ENCODE measurements at regions of chr2 and their contacts with region 1.

Region 1: DNA sequence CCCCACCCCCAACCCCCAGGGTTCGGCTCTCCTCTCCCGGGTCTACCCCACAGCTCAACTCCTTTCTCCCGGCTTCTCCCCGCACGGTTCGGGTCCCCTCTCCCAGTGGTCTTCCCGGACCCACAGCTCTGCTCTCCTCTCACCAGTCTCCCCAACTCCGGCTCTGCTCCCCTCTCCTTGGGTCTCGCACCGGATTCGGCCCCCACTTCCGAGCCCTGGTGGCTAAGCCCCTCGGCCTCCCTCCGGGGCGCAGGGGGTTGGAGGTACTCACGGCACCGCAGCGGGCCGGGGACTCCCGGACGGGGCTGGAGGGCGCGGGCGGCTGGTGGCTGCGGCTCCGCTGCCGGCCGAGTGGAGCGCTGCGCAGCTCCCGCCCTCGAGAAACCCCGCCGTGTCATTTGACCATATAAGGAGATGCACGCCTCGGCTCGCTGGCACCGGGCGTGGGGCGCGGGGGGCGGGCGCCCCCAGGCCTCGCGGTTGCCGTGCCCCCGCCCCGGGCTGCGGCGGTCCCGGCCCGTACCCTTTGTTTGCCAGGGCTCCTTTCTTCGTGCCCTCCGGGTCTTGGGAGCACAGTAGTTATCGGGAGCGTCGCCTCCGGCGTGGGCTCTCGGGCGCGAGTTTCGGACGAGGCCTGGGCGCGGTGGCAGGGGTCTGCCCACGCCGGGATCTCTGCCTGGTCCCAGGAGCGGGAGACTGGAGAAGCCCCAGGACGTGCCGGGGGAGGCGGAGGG is at the start of gene FHL2:
- DNase-seq: peak; percentile 86
- ATAC-seq: peak; percentile 93
- H3K4me3 Mint-ChIP-seq: peak within 1 kb of the TSS; percentile 74
- H3K27ac Mint-ChIP-seq: peak within 1 kb of the TSS; percentile 65
- H3K4me1 Mint-ChIP-seq: peaks cover 13% of the 10 kb centered on the region
- H3K27me3 Mint-ChIP-seq: peaks cover 10% of the 10 kb centered on the region
- total RNA-seq, gene FHL2: 3.9 to 4.7 TPM

Region 2: DNA sequence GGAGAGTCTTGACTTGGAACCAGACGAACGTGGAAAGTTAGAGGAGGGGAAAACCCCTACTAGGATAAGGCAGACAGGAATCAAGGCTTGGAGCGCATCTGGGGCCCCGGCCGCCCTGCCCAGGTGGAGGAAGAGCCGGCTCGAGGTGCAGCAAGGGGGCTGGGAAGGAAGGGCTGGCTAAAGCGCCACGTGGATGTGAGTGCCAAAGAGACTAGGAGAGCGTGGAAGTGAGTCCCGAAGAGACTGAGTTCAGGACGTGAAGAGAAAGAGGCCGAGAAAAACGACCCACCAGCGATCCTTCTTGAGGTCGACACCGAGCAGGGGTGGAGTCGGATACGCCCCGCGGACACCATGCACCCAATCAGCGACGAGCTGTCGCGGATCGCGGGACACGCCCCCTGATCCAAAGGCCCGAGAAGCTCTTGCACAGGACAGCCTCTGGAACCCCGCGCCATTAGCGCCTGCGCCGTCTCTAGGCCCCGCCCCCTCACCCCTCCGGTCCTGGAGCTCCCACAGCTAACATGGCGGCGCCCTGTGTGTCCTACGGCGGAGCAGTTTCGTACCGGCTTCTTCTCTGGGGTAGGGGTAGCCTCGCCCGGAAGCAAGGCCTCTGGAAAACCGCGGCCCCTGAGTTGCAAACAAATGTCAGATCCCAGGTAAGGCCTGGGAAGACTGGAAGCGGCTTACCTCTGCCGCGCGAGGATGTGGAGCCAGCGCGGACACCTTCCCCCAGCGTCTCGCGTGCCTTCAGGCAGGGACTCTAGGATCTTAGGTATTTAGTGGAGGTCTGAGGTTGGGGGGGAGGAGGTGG is 361.1 kb before region 1 on chr2 and contains the start of gene MRPS9:
- CTCF ChIA-PET with region 1: no interaction called
- POLR2A ChIA-PET with region 1: no interaction called
- intact Hi-C with region 1: loop called in 1 of 2 experiments (anchors 5 kb)
- DNase-seq: peak; percentile 99
- ATAC-seq: peak; percentile 99
- H3K4me3 Mint-ChIP-seq: peak within 1 kb of the TSS; percentile 86
- H3K27ac Mint-ChIP-seq: peak within 1 kb of the TSS; percentile 94
- H3K4me1 Mint-ChIP-seq: peaks cover 28% of the 10 kb centered on the region
- H3K27me3 Mint-ChIP-seq: no peaks in the 10 kb centered on the region
- total RNA-seq, gene MRPS9: 41.0 to 46.0 TPM

Region 3: GRCh38 chr2:105337124-105338019 is 61.5 kb before region 1 on chr2 and contains the start of gene C2orf49:
- CTCF ChIA-PET with region 1: no interaction called
- POLR2A ChIA-PET with region 1: no interaction called
- intact Hi-C with region 1: loop called in 1 of 2 experiments (anchors 1 kb)
- DNase-seq: peak; percentile 94
- ATAC-seq: peak; percentile 93
- H3K4me3 Mint-ChIP-seq: peak within 1 kb of the TSS; percentile 91
- H3K27ac Mint-ChIP-seq: peak within 1 kb of the TSS; percentile 100
- H3K4me1 Mint-ChIP-seq: peaks cover 27% of the 10 kb centered on the region
- H3K27me3 Mint-ChIP-seq: no peaks in the 10 kb centered on the region
- total RNA-seq, gene C2orf49: 19.3 to 27.8 TPM

Region 4: GRCh38 chr2:105369747-105370690 is 28.8 kb before region 1 on chr2:
- CTCF ChIA-PET with region 1: interaction called, 5 read pairs
- POLR2A ChIA-PET with region 1: interaction called, 3 read pairs
- intact Hi-C with region 1: loop called in 1 of 2 experiments (anchors 1 kb)
- DNase-seq: peak; percentile 95
- ATAC-seq: peak; percentile 99
- H3K4me3 Mint-ChIP-seq: no peak overlapping the region
- H3K27ac Mint-ChIP-seq: no peak overlapping the region
- H3K4me1 Mint-ChIP-seq: peaks cover 10% of the 10 kb centered on the region
- H3K27me3 Mint-ChIP-seq: no peaks in the 10 kb centered on the region

Region 5: DNA sequence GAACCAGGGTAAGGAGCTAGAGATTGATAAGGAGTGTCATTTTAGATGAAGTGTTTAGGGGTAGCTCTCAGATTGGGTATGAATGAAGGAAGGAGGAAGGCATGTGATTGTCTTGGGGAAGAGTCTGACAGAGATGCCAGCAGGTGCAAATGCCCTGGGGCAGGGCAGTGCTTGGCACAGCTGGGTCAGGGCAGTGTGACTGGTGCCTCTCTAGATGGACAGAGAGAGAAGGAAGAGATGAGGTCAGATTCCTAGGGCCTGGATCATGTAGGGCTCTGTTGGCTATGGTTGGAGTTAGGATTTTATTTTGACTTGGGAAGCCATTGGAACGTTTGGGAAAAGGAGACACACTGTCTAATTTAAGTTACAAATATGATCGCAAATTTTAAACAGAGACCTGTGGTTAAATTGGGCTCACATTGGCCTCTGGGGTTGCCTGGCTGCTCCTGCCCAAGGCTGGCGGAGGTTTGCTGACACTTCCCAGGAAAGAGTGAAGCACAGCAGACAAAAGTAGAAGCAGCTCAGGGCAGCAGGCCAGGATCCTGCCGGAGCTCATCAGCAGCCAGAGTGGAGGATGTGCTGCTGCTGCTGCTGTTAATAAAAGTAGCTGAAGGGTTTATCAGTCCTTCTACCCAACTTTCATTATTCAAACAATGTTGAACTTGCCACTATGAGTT is 32.6 kb after region 1 on chr2:
- CTCF ChIA-PET with region 1: no interaction called
- POLR2A ChIA-PET with region 1: no interaction called
- intact Hi-C with region 1: no loop called
- DNase-seq: no peak
- ATAC-seq: no peak
- H3K4me3 Mint-ChIP-seq: no peak overlapping the region
- H3K27ac Mint-ChIP-seq: no peak overlapping the region
- H3K4me1 Mint-ChIP-seq: peaks cover 15% of the 10 kb centered on the region
- H3K27me3 Mint-ChIP-seq: peaks cover 2% of the 10 kb centered on the region

Region 6: DNA sequence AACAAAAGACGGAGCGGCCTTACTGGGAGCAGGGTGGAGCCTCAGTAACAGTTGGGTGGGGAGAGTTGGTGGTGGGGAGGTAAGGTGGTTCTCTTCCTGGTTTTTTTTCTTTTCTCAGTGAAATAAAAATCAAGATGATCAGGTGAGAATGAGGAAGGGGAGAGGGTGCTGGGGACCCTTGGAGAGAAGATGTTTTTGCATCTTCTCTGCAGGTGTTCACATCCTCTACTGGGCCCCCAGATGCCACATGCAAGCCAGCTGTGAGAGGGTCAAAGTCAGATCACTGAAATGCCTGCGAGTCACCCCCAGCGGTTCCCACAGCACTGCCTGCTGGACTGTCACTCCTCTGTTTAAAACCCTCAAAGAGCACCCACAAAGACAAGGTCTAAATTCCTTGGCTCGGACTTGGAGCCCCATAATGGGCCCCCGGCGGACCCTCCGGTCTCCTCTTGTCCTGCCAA is 69.7 kb after region 1 on chr2:
- CTCF ChIA-PET with region 1: interaction called, 3 read pairs
- POLR2A ChIA-PET with region 1: no interaction called
- intact Hi-C with region 1: loop called in 1 of 2 experiments (anchors 5 kb)
- DNase-seq: no peak
- ATAC-seq: peak; percentile 57
- H3K4me3 Mint-ChIP-seq: peak overlapping the region; percentile 2
- H3K27ac Mint-ChIP-seq: peak overlapping the region; percentile 79
- H3K4me1 Mint-ChIP-seq: peaks cover 17% of the 10 kb centered on the region
- H3K27me3 Mint-ChIP-seq: no peaks in the 10 kb centered on the region

Region 7: GRCh38 chr2:105734762-105735538 is 336.1 kb after region 1 on chr2:
- CTCF ChIA-PET with region 1: no interaction called
- POLR2A ChIA-PET with region 1: no interaction called
- intact Hi-C with region 1: loop called in 1 of 2 experiments (anchors 5 kb)
- DNase-seq: no peak
- ATAC-seq: no peak
- H3K4me3 Mint-ChIP-seq: no peak overlapping the region
- H3K27ac Mint-ChIP-seq: no peak overlapping the region
- H3K4me1 Mint-ChIP-seq: peaks cover 52% of the 10 kb centered on the region
- H3K27me3 Mint-ChIP-seq: no peaks in the 10 kb centered on the region

Measured in activated CD4-positive, alpha-beta T cell treated with anti-CD3 and anti-CD28 coated beads for 36 hours (primary cell).